ENCODE measurements at regions of chr9 and their contacts with region 1.

Region 1: DNA sequence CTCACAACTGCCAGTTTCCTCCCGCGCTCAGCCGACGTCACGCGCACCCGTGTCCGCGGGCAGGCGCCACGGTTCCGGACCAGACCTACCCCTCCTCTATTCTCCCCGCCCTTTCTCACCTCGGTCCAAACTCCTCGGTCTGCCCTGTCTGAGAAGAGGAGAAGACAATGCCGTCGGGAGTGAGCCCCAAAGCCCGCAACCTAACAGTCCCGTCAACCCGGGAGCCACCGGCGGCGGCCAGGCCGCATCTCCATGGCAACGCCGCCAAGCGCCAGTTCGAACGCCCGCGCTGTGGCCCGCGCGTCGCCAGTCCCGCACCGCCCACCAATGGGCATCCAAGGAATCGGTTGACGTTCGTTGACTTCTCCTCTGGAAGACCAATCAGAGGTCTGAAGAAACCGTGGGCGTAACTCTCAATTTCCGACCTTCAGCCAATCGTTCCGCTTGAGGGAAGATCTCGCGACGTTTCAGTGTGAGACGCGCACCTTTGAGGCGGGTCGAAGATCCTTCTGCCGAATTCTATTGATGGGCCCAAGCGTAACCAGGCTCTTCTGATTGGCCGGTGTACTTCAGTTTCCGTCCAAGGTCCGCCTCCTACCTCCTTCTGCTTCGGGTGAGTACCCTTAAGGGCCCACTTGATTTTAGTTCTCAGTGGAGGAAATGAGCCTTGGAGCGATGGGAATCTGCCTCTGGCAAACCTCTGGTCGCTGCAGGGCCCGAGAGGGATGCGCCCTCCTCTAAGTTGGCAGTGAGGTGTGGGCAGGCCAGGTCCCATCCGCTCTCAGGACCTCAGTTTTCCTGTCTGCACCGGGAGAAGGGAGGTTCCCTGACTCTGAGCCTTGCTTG is at the starts of genes KIF24 and NUDT2:
- DNase-seq: peak; percentile 93 to 99 (median 96)

Region 2: DNA sequence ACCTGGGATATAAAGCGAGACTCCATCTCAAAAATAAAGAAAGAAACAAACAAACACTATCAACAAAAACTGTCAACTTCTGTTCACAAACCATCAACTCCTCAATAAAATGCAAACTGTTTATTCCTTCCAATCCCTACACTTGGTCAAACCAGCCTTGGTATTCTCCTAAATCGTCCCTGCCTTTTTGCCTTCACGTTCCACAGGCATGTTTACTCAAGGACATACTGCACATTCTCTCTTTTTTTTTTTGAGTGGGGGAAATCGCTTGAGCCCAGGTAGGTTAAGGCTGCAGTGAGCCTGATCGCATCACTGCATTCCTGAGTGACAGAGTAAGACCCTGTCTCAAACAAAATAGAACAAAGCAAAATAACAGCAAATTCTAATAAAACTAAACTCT is 293.6 kb before region 1 on chr9:
- intact Hi-C with region 1: no loop called
- DNase-seq: no peak

Region 3: DNA sequence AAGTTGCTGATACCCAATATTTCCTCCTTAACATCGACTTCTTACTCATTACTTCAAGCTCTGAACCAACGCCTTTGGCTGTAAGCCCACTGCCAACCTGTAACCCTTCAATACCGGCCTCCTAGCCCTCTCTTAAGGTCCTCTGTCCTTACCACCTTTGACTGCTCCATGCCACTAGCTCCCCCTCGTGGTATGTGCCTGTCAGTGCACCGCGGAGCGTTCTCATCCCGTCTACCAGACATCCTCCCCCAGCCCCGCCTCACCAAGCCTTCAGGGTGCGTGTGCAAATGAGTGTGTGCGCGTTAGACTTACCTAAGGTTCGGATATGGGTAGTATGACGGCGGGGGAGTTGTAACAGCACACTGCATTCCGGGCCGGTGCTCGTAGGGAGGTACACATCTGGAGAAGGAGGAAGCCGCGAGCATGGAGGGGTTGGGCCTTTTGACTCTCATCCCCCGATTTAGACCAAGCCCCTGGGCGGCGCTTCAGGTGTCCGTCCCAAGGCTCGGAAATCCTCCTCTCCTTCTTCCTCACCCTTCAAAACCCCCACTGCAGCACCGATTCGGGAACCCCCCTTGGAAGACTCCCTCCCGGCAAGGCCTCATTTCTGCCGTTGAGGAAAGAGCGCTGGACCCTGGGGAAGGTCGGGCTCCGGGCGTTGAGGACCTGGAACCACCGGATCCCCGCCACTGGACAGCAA is 50.3 kb after region 1 on chr9:
- intact Hi-C with region 1: loop called (anchors 1 kb)
- DNase-seq: peak; percentile 70 to 97 (median 86)

Region 4: GRCh38 chr9:34458013-34458958 is 129.1 kb after region 1 on chr9 and contains the starts of genes DNAI1 and FAM219A:
- intact Hi-C with region 1: loop called (anchors 5 kb)
- DNase-seq: peak; percentile 97 to 100 (median 99)

Region 5: DNA sequence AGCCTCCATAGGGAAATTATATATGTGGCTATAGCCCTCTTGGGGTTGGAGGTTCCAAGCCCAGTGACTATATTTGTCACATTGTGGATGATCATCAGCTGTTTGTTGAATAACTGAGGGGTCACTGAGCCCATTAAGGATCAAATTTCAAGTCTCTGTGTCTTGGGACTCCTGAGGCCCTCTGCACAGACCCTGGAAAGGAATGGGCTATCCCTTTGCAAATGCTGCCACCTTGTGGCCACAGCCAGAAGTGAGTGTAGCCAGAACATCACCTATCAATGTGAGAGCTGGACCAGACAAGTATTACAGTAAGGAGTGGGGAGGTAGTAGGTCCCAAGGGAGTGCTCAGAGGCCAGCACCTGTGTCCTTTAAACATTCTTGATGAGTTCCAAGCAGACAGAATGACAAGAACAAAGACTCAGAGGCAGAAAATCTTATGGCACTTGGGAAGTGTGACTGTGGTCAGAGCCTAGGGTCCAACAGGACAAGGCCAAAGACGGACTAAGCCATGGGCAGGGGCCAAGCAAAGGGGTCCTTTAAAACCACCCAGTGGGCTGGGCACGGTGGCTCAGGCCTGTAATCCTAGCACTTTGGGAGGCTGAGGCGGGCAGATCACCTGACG is 274.5 kb after region 1 on chr9:
- intact Hi-C with region 1: loop called (anchors 5 kb)
- DNase-seq: peak; percentile 82 to 97 (median 92)

Measured in posterior cingulate gyrus (tissue), 11 donors.